Activated B cell treated with CpG ODN at 0.5 μM for 24 hours (primary cell): ENCODE measurements at regions of chr12 and their contacts with region 1.

Region 1: GRCh38 chr12:122051231-122051876 is 27.2 kb upstream of the MLXIP start:
- DNase-seq: no peak
- ATAC-seq: no peak
- H3K4me3 Mint-ChIP-seq: no peak overlapping the region
- H3K27ac Mint-ChIP-seq: no peak overlapping the region
- H3K4me1 Mint-ChIP-seq: peaks cover 4% of the 10 kb centered on the region
- H3K27me3 Mint-ChIP-seq: no peaks in the 10 kb centered on the region
- CTCF ChIP-seq: no peak

Region 2: DNA sequence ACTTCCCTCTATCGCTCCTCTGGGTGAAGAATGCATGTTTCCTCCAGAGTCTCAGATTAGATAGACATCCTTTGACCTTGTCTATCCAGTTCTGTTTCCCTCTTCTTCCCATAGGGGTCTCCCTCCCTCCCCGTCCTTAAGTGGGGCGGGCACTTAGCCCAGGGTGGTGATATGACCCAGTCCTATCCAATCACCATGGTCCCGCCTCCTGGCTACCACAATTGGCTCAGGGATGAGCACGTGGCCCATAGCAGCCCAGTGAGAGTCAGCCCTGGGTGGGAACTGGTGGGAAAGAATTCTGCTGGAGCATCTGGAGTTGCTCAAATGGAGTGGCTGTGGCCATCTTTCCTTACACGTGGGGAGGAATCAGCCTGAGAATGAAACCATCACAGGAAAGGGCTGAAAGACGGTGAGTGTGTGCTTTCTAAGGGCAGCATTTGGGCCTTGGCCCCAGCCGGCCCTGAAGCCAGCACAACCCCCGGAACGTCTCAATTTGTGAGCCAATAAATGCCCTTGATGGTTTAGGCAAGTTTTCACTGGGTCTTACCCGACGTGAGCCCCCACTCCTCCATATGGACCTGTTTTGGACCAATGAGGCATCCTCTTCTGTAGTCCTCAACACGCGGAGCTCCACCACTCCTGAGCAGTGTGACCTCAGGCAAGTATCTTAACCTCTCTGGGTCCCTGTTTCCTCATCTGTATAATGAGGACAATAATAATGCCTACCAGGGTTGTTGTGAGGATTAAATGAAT is 12.8 kb after region 1 on chr12:
- CTCF ChIA-PET with region 1: interaction called, 6 read pairs
- POLR2A ChIA-PET with region 1: no interaction called
- intact Hi-C with region 1: loop called (anchors 2 kb)
- DNase-seq: no peak
- ATAC-seq: peak; percentile 82
- H3K4me3 Mint-ChIP-seq: no peak overlapping the region
- H3K27ac Mint-ChIP-seq: peak overlapping the region; percentile 32
- H3K4me1 Mint-ChIP-seq: peaks cover 49% of the 10 kb centered on the region
- H3K27me3 Mint-ChIP-seq: no peaks in the 10 kb centered on the region
- CTCF ChIP-seq: no peak

Region 3: DNA sequence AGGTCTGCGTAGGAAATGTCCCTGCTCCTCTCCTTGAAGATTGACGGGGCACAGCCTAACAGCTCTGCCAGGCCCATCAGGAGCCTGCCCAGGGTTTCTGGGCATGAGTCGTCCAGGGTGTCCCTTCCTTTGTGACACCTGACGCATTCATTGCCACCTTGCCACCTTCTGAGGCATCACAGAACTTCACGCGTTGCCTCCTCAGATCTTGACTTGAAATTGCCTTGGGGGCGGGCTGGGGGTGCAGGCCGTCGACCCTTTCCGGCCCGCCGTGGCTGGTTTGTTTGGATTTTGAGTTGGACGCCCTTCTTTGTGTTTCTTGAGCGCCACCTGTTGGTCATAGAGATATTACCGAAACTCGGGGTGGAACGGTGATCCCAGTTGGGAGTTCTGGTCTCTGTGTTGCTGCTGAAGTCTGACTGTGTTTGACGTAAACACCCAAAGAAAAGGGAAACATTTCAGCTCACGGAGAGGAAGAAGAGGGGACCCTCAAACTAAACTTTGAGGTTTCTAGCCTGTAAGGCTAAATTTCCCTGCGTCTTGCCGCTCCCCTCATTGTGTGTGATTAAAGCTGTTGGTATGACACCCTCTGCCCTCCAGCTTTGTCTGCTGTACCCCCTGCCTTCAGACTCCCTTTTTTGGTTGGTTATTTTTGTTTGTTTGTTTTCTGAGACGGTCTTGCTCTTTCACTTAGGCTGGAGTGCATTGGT is 71.9 kb after region 1 on chr12:
- CTCF ChIA-PET with region 1: interaction called, 122 read pairs
- POLR2A ChIA-PET with region 1: interaction called, 13 read pairs
- intact Hi-C with region 1: loop called (anchors 1 kb)
- DNase-seq: peak; percentile 50
- ATAC-seq: peak; percentile 62
- H3K4me3 Mint-ChIP-seq: no peak overlapping the region
- H3K27ac Mint-ChIP-seq: peak overlapping the region; percentile 38
- H3K4me1 Mint-ChIP-seq: peaks cover 23% of the 10 kb centered on the region
- H3K27me3 Mint-ChIP-seq: no peaks in the 10 kb centered on the region
- CTCF ChIP-seq: no peak

Region 4: DNA sequence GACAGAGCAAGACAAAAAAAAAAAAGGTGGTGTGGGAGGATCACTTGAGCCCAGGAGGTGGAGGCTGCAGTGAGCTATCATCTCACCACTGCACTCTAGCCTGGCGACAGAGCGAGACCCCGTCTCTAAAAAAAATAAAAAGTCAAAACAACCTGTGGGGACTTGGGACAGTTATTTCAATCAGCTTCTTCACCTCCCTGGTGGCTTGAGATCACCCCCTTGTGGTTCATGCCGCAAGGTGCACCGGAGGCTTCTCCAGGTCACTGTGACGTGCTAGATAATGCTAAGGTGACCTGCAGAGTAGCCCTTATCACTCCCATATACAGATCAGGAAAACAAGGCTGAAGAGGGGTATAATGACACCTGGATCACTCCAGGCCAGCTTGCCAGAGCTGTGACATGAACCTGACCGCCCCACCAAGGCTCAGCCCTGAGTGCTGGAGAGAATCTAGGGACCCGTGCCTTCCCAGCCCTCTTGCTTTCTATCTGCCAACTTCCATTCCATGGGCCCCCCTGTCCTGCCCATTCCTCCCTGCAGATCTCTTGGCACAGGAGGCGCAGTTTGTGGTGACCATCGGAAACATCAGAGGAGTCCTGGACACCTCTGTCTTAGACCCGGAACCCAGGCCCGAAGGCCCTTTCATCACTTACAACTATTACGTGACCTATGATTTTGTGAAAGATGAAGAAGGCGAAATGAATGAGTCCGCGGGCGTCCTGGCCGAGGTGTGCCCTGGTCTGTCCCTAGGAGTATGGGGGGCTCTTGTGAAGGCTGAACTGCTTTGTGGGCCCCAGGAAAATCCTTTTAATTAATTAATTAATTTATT is 139.7 kb after region 1 on chr12:
- CTCF ChIA-PET with region 1: interaction called, 9 read pairs
- POLR2A ChIA-PET with region 1: no interaction called
- intact Hi-C with region 1: loop called (anchors 1 kb)
- DNase-seq: peak; percentile 42
- ATAC-seq: peak; percentile 92
- H3K4me3 Mint-ChIP-seq: no peak overlapping the region
- H3K27ac Mint-ChIP-seq: no peak overlapping the region
- H3K4me1 Mint-ChIP-seq: no peaks in the 10 kb centered on the region
- H3K27me3 Mint-ChIP-seq: no peaks in the 10 kb centered on the region
- CTCF ChIP-seq: no peak

Region 5: GRCh38 chr12:122356192-122356635 is 304.9 kb after region 1 on chr12:
- CTCF ChIA-PET with region 1: no interaction called
- POLR2A ChIA-PET with region 1: no interaction called
- intact Hi-C with region 1: loop called (anchors 1 kb)
- DNase-seq: no peak
- ATAC-seq: peak; percentile 77
- H3K4me3 Mint-ChIP-seq: no peak overlapping the region
- H3K27ac Mint-ChIP-seq: no peak overlapping the region
- H3K4me1 Mint-ChIP-seq: peaks cover 7% of the 10 kb centered on the region
- H3K27me3 Mint-ChIP-seq: no peaks in the 10 kb centered on the region
- CTCF ChIP-seq: peak; percentile 71